GM12878 (cell line): ENCODE measurements at regions of chr1 and their contacts with region 1.

Region 1: GRCh38 chr1:56135069-56135863 is 444.1 kb downstream of the PLPP3 start:
- DNase-seq: no peak
- ATAC-seq: peak; percentile 67
- H3K4me3 ChIP-seq: no peak overlapping the region
- H3K27ac ChIP-seq: peak overlapping the region; percentile 56
- H3K4me1 ChIP-seq: peaks cover 25% of the 10 kb centered on the region
- H3K27me3 ChIP-seq: no peaks in the 10 kb centered on the region
- CTCF ChIP-seq: no peak
- EP300 ChIP-seq: peak in 1 of 2 experiments; percentile 87; a peak in 1 of 4 replicates
- POLR2A ChIP-seq: no peak
- RAD21 ChIP-seq: 0 out of 2 replicates have a peak, but pooled peaks have one; percentile 1

Region 2: GRCh38 chr1:56074007-56074651 is 61.1 kb before region 1 on chr1:
- CTCF ChIA-PET with region 1: interaction called, 7 read pairs
- POLR2A ChIA-PET with region 1: interaction called, 3 read pairs
- RAD21 ChIA-PET with region 1: interaction called, 7 read pairs
- SMC1A ChIA-PET with region 1: interaction called, 13 read pairs
- in situ Hi-C with region 1: no loop called
- intact Hi-C with region 1: loop called (anchors 2 kb)
- DNase-seq: no peak
- ATAC-seq: no peak
- H3K4me3 ChIP-seq: no peak overlapping the region
- H3K27ac ChIP-seq: no peak overlapping the region
- H3K4me1 ChIP-seq: no peaks in the 10 kb centered on the region
- H3K27me3 ChIP-seq: no peaks in the 10 kb centered on the region
- CTCF ChIP-seq: no peak
- EP300 ChIP-seq: no peak
- POLR2A ChIP-seq: no peak
- RAD21 ChIP-seq: no peak

Region 3: DNA sequence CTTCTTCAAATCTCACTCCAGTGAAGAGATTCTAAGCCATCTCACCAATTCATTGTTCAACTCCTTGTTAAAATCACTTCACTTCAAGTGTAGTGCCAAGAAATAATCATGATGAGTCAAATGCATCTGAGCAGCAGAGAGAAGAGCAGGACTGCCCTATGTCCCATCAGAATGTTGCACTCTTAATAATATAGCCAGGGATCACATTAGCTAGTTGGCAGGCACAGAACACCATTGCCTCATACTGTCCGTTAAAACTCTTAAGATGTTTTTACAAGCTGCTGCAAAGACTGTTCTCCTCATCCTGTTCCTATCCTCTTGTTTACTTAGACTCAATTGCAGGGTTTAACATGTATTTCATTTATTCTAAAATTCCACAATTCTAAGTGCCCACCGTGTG is 11.2 kb after region 1 on chr1:
- CTCF ChIA-PET with region 1: interaction called, 19 read pairs
- POLR2A ChIA-PET with region 1: interaction called, 6 read pairs
- RAD21 ChIA-PET with region 1: interaction called, 19 read pairs
- SMC1A ChIA-PET with region 1: interaction called, 79 read pairs
- in situ Hi-C with region 1: no loop called
- intact Hi-C with region 1: no loop called
- DNase-seq: no peak
- ATAC-seq: no peak
- H3K4me3 ChIP-seq: no peak overlapping the region
- H3K27ac ChIP-seq: no peak overlapping the region
- H3K4me1 ChIP-seq: no peaks in the 10 kb centered on the region
- H3K27me3 ChIP-seq: no peaks in the 10 kb centered on the region
- CTCF ChIP-seq: no peak
- EP300 ChIP-seq: no peak
- POLR2A ChIP-seq: no peak
- RAD21 ChIP-seq: no peak

Region 4: GRCh38 chr1:56175211-56175610 is 39.9 kb after region 1 on chr1:
- CTCF ChIA-PET with region 1: interaction called, 5 read pairs
- POLR2A ChIA-PET with region 1: interaction called, 3 read pairs
- RAD21 ChIA-PET with region 1: interaction called, 16 read pairs
- SMC1A ChIA-PET with region 1: interaction called, 17 read pairs
- in situ Hi-C with region 1: no loop called
- intact Hi-C with region 1: no loop called
- DNase-seq: no peak
- ATAC-seq: no peak
- H3K4me3 ChIP-seq: no peak overlapping the region
- H3K27ac ChIP-seq: no peak overlapping the region
- H3K4me1 ChIP-seq: no peaks in the 10 kb centered on the region
- H3K27me3 ChIP-seq: no peaks in the 10 kb centered on the region; a peak in 1 of 4 replicates
- CTCF ChIP-seq: no peak
- EP300 ChIP-seq: no peak
- POLR2A ChIP-seq: no peak
- RAD21 ChIP-seq: no peak

Region 5: GRCh38 chr1:56222914-56223540 is 87.8 kb after region 1 on chr1:
- CTCF ChIA-PET with region 1: no interaction called
- POLR2A ChIA-PET with region 1: no interaction called
- RAD21 ChIA-PET with region 1: interaction called, 7 read pairs
- SMC1A ChIA-PET with region 1: interaction called, 22 read pairs
- in situ Hi-C with region 1: no loop called
- intact Hi-C with region 1: no loop called
- DNase-seq: no peak
- ATAC-seq: peak; percentile 93
- H3K4me3 ChIP-seq: no peak overlapping the region
- H3K27ac ChIP-seq: no peak overlapping the region
- H3K4me1 ChIP-seq: no peaks in the 10 kb centered on the region
- H3K27me3 ChIP-seq: no peaks in the 10 kb centered on the region
- CTCF ChIP-seq: no peak
- EP300 ChIP-seq: peak in 1 of 2 experiments; percentile 58; a peak in 1 of 4 replicates
- POLR2A ChIP-seq: no peak
- RAD21 ChIP-seq: no peak

Region 6: GRCh38 chr1:56355422-56355821 is 220.2 kb after region 1 on chr1:
- CTCF ChIA-PET with region 1: no interaction called
- POLR2A ChIA-PET with region 1: no interaction called
- RAD21 ChIA-PET with region 1: no interaction called
- SMC1A ChIA-PET with region 1: no interaction called
- in situ Hi-C with region 1: no loop called
- intact Hi-C with region 1: no loop called
- DNase-seq: no peak
- ATAC-seq: no peak
- H3K4me3 ChIP-seq: no peak overlapping the region
- H3K27ac ChIP-seq: no peak overlapping the region
- H3K4me1 ChIP-seq: no peaks in the 10 kb centered on the region
- H3K27me3 ChIP-seq: no peaks in the 10 kb centered on the region
- CTCF ChIP-seq: no peak
- EP300 ChIP-seq: no peak
- POLR2A ChIP-seq: no peak
- RAD21 ChIP-seq: no peak